SK-N-SH (cell line): ENCODE measurements at regions of chr4 and their contacts with region 1.

Region 1: DNA sequence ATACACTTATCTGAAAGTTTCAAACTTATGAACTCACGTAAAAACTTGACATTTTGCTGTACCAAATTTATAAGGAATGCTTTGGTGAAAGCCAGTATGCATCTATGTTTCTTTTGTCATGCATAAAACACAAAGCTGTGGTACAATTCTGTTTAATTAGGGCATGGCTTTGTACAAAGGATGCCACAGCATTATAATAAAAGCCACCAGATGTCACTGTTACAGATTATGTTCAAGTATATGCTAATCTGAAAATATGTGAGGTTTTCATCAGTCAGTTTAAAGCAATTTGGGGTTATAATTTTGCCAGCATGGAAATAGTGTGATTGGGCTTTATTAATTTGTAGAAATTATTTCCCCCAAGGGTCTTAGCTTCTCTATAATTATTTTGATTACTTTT is 69.0 kb downstream of the ATOH1 start:
- DNase-seq: peak; percentile 35
- H3K4me3 ChIP-seq: no peak overlapping the region
- H3K27ac ChIP-seq: no peak overlapping the region
- H3K4me1 ChIP-seq: no peaks in the 10 kb centered on the region
- H3K27me3 ChIP-seq: no peaks in the 10 kb centered on the region
- CTCF ChIP-seq: peak; percentile 57
- EP300 ChIP-seq: no peak
- RAD21 ChIP-seq: peak; percentile 56

Region 2: GRCh38 chr4:93700571-93700970 is 197.0 kb before region 1 on chr4:
- CTCF ChIA-PET with region 1: no interaction called
- POLR2A ChIA-PET with region 1: no interaction called
- DNase-seq: peak; percentile 2
- H3K4me3 ChIP-seq: no peak overlapping the region
- H3K27ac ChIP-seq: no peak overlapping the region
- H3K4me1 ChIP-seq: no peaks in the 10 kb centered on the region
- H3K27me3 ChIP-seq: no peaks in the 10 kb centered on the region
- CTCF ChIP-seq: no peak
- EP300 ChIP-seq: no peak
- RAD21 ChIP-seq: no peak

Region 3: DNA sequence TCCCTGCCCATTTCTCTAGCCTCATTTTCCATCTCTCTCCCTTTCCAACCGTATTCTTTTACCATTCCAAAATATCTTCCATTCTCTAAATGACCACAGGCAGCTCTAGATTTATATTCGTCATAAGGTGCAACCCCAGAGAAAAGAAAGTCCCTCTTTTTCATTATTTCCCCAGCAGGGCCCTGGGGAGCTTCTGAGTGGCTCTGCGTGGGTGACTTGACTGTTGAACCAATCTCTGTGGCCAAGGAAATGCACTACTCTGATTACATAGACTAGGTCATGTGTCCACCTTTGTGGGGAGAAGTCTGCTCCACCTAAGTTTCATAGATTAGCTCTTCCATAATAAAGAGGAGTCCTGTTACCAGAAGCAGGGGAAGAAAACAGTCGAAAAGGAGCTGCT is 17.6 kb before region 1 on chr4:
- CTCF ChIA-PET with region 1: interaction called, 10 read pairs
- POLR2A ChIA-PET with region 1: no interaction called
- DNase-seq: no peak
- H3K4me3 ChIP-seq: no peak overlapping the region
- H3K27ac ChIP-seq: no peak overlapping the region
- H3K4me1 ChIP-seq: no peaks in the 10 kb centered on the region
- H3K27me3 ChIP-seq: no peaks in the 10 kb centered on the region
- CTCF ChIP-seq: no peak
- EP300 ChIP-seq: no peak
- RAD21 ChIP-seq: no peak